ENCODE measurements at regions of chr6 and their contacts with region 1.

Region 1: GRCh38 chr6:40894962-40895799 is 143.8 kb downstream of the UNC5CL start:
- DNase-seq: peak; percentile 55 to 71 (median 70)
- ATAC-seq: peak; percentile 91
- H3K4me3 ChIP-seq: no peak overlapping the region
- H3K4me1 ChIP-seq: no peaks in the 10 kb centered on the region
- CTCF ChIP-seq: peak; percentile 39

Region 2: DNA sequence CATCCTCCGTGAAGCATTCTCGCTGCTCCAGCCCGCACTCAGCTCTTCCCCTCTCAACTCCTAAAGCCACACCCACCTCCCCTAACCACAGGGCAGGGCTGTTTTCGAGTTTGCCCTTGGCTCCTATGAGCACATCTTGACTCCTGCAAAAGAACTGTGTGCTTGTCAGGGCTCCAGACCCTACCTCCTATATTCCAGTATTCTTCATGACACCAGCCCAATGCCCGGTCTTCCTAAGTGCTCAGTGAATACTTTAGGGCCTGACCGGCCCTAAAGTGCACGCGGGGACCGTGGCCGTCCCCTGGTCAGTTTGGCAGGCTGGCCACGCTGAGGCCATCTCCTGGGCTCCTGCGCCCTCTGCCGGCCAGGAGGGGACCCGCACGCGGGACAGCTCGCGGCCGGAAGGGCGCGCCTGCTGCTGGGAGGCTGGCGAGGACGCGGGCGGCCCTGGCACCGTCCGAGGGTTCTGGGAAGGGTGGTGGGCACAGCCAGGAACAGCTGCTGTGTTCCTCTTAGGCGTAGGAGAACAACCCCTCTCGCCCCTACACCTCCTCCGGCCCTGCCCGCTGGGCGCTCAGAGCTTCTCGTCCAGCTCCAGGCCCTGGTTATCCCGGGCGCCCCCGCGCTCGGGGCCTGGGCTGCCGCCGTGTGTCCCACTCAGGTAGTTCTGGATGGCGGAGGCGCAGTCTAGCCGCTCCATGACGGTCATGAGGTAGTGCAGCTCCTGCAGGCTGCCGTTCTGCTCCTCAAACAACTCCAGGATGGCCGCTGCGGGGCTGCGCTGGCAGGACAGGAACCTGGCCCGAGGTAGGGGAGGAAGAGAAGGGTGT is 132.8 kb after region 1 on chr6:
- intact Hi-C with region 1: loop called in 1 of 2 experiments (anchors 10 kb)
- DNase-seq: peak; percentile 85 to 94 (median 92)
- ATAC-seq: peak; percentile 98
- H3K4me3 ChIP-seq: no peak overlapping the region
- H3K4me1 ChIP-seq: peaks cover 6% of the 10 kb centered on the region
- CTCF ChIP-seq: peak; percentile 99